Ascending aorta (tissue), 2 donors: ENCODE measurements at regions of chr11 and their contacts with region 1.

Region 1: GRCh38 chr11:134124660-134125451 is 56.0 kb downstream of the JAM3 start:
- DNase-seq: no peak
- H3K4me3 ChIP-seq: peak overlapping the region; percentile 56 to 70
- H3K27ac ChIP-seq: peak overlapping the region; percentile 61 to 90
- H3K4me1 ChIP-seq: peaks cover 19 to 41% of the 10 kb centered on the region in 2 donors
- H3K27me3 ChIP-seq: no peaks in the 10 kb centered on the region
- CTCF ChIP-seq: peak in 1 of 3 experiments; percentile 17

Region 2: DNA sequence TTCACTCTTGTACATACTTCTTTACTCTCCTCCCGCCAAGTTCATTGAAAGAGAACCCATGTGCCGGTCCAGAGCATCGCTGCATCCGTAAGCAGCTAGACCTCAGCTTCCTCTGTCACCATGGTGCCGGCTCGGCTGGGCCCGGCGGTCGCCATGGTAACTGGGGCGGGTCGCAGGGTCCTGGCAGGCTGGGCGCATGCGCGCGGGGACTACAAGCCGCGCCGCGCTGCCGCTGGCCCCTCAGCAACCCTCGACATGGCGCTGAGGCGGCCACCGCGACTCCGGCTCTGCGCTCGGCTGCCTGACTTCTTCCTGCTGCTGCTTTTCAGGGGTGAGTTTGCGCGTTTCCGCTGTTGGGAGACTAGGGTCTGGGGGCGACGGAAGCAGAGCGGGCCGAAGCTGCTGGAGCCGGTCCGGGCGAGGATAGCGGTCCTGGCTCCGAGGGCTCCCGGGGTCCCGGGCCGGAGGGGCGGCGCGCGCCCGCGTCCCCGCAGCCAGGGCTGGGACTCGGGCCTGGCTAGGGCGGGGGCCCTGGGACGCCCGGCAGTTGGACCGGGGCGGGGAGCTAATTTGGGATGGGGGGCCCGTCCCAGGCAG is 55.9 kb before region 1 on chr11 and contains the start of gene JAM3:
- intact Hi-C with region 1: loop called (anchors 1 kb)
- DNase-seq: peak; percentile 81 to 99
- H3K4me3 ChIP-seq: peak within 1 kb of the TSS; percentile 82 to 84
- H3K27ac ChIP-seq: peak within 1 kb of the TSS; percentile 95
- H3K4me1 ChIP-seq: peaks cover 0 to 10% of the 10 kb centered on the region in 2 donors
- H3K27me3 ChIP-seq: no peaks in the 10 kb centered on the region
- CTCF ChIP-seq: no peak
- total RNA-seq, gene JAM3: 59.8 TPM